Activated CD4-positive, alpha-beta T cell treated with anti-CD3 and anti-CD28 coated beads for 36 hours (primary cell): ENCODE measurements at regions of chr15 and their contacts with region 1.

Region 1: DNA sequence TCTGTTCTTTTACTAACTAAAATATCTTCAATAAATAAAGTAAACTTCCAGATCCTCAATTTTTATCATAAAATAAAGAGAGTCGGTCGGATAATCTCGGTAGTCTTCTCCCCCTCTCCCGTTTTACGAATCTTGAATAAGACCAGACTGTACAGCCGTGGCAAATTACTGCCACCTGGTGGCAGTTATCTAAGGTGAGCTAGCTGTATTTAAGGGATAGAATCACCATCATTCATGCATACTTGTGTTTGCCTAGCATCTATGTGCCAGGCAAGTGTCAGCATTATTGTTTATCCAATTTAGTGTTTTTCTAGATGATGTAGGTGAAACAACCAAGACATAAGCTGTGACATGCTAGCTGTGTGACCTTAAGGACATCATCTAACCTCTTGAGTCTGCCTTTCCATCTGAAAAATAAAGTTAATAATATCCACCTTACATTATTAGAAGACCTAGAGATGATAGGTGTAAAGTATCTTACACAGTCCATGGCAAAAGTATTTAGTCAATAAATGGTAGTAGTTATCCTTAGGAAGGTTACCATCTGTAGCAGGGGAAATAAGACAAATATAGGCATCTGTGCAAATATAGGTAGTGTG is 21.3 kb downstream of the DUT start:
- DNase-seq: peak; percentile 69
- ATAC-seq: peak; percentile 79
- H3K4me3 Mint-ChIP-seq: no peak overlapping the region
- H3K27ac Mint-ChIP-seq: no peak overlapping the region
- H3K4me1 Mint-ChIP-seq: no peaks in the 10 kb centered on the region
- H3K27me3 Mint-ChIP-seq: peaks cover 5% of the 10 kb centered on the region

Region 2: DNA sequence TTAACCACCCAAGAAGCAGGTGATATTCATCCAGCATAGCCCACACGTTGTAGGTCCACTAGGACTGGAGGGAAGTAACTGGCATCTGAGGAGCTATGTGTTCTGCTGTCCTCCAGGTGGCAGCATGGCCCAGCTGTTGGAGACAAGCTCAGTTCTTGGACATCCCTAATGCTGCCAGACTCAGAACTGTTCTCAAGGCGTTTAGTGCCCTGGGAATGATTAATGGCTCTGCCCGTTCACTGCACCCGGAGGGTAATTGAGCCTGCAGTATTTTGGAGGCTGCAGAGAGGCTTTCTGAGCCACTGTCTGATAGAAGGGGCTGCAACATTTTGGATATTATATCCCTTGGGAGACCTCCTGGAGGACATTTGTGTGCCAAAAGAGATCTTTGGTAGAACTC is 1156.5 kb before region 1 on chr15:
- CTCF ChIA-PET with region 1: interaction called, 4 read pairs
- POLR2A ChIA-PET with region 1: no interaction called
- intact Hi-C with region 1: loop called in 1 of 2 experiments (anchors 5 kb)
- DNase-seq: peak; percentile 75
- ATAC-seq: peak; percentile 36
- H3K4me3 Mint-ChIP-seq: no peak overlapping the region
- H3K27ac Mint-ChIP-seq: no peak overlapping the region
- H3K4me1 Mint-ChIP-seq: no peaks in the 10 kb centered on the region
- H3K27me3 Mint-ChIP-seq: peaks cover 5% of the 10 kb centered on the region

Region 3: DNA sequence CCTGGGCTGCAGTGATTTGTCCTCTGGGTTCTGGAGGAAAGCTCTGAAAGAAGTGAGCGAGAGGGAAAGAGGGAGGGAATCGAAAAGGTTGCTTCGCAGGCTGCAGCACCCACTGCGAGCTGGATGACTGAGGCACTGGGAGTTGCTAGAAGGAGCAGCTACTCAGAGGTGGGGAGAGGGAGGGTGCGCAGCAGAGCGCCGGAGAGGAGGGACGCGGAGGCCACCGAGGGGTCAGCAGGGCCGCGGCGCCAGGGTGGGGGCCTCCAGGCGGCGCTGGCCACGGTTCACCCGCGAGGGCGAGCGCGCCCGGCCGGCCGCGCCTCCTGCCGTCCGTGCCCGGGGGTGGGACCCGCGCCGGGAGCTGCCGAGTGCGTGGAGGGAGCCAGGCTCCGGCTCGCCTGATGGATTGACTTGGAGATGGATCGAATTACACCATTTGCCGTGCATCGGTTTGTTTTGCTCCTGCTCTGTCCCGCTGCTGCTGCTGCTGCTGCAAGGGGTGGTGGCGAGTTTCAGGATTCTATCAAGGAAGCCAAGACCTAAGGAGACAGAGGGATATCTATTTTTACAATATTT is 635.4 kb before region 1 on chr15 and contains the start of gene SEMA6D:
- CTCF ChIA-PET with region 1: no interaction called
- POLR2A ChIA-PET with region 1: no interaction called
- intact Hi-C with region 1: loop called in 1 of 2 experiments (anchors 10 kb)
- DNase-seq: peak; percentile 7
- ATAC-seq: no peak
- H3K4me3 Mint-ChIP-seq: no peak within 1 kb of the TSS
- H3K27ac Mint-ChIP-seq: no peak within 1 kb of the TSS
- H3K4me1 Mint-ChIP-seq: peaks cover 2% of the 10 kb centered on the region
- H3K27me3 Mint-ChIP-seq: peaks cover 51% of the 10 kb centered on the region
- total RNA-seq, gene SEMA6D: not detected

Region 4: DNA sequence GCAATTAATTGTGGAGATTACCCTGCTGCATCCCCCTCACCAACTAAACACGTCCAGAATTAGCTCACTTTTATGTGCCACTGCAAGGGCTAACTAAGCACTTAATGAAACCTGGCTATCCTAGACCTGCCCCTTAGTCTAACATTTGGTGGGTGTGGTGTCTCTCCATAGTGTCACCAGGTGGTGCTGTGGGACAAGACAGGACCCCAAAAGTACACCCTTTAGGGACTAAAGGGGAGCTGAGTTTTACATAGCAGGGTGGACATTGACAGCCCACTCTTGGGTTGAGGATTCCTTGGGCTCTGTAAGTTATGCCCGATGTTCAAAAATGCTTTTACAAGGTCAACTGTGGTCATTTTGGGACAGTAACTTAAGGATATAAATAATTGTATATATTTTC is 15.6 kb before region 1 on chr15:
- CTCF ChIA-PET with region 1: interaction called, 26 read pairs
- POLR2A ChIA-PET with region 1: no interaction called
- intact Hi-C with region 1: no loop called
- DNase-seq: peak; percentile 16
- ATAC-seq: no peak
- H3K4me3 Mint-ChIP-seq: no peak overlapping the region
- H3K27ac Mint-ChIP-seq: no peak overlapping the region
- H3K4me1 Mint-ChIP-seq: peaks cover 41% of the 10 kb centered on the region
- H3K27me3 Mint-ChIP-seq: no peaks in the 10 kb centered on the region

Region 5: DNA sequence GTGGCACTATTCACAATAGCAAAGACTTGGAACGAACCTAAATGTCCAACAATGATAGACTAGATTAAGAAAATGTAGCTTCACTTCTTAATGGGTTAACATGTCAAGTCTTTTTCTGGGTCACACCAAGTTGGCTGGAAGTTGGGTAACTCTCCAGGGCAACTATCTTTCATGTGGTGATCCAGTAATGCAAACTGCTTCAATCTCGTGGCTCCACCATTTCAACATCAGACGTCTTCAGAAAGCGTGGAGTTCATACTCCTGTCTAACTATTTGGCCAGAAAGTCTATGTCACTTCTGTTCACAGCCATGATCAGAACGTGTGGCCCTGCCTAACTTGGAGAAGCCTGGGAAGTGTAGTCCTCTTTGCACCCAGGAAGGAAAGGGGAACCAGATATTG is 10.9 kb after region 1 on chr15:
- CTCF ChIA-PET with region 1: interaction called, 10 read pairs
- POLR2A ChIA-PET with region 1: no interaction called
- intact Hi-C with region 1: no loop called
- DNase-seq: no peak
- ATAC-seq: no peak
- H3K4me3 Mint-ChIP-seq: no peak overlapping the region
- H3K27ac Mint-ChIP-seq: no peak overlapping the region
- H3K4me1 Mint-ChIP-seq: peaks cover 5% of the 10 kb centered on the region
- H3K27me3 Mint-ChIP-seq: peaks cover 3% of the 10 kb centered on the region

Region 6: DNA sequence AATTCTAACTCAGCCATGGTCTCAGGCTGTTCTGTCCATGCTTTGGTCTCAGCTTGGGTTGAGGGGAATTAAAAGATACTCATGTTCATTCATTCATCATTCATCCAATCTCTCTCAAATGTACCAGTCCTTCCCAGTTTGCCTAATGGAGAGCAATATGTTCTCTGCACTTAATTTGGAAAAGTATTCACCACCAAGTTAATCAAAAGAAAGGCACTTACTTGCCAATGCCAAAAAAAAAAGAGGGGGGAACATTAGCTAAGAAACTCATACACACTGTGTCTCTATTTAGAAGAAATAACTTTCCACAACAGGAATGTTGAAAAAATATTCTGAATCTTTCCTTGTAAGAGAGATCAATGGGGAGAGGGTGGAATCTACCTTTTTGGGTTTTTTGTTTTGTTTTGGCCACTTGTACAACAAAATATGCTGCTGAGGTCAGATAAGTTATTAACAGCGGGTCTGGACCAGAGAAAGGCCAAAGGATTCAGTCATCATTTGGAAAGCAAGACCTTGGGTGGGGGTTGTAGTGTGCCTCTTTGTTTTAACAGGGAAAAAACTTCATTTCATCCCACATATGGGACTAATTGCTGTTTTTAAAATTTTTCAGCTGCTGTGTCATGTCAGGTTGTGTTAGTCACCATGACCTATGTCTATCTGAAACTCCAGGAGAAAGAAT is 140.7 kb after region 1 on chr15:
- CTCF ChIA-PET with region 1: no interaction called
- POLR2A ChIA-PET with region 1: no interaction called
- intact Hi-C with region 1: no loop called
- DNase-seq: no peak
- ATAC-seq: no peak
- H3K4me3 Mint-ChIP-seq: no peak overlapping the region
- H3K27ac Mint-ChIP-seq: no peak overlapping the region
- H3K4me1 Mint-ChIP-seq: no peaks in the 10 kb centered on the region
- H3K27me3 Mint-ChIP-seq: no peaks in the 10 kb centered on the region

Region 7: DNA sequence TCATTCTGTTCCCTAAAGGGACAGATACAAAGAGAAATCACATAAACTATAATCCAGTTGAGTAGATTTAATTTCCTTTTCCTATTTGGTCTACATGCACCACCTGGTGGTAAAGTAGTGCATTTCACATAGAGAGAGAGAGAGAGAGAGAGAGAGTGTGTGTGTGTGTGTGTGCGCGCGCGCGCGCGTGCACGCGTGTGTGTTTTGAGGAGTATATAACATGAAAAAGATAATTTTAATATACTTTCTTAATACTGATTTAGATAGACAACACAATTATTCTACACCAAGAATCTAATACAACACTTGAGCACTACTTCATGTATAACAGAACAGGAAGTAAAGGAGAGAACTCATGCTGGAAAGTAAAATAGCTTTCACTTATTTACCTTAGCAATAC is 1069.4 kb after region 1 on chr15:
- CTCF ChIA-PET with region 1: no interaction called
- POLR2A ChIA-PET with region 1: no interaction called
- intact Hi-C with region 1: loop called in 1 of 2 experiments (anchors 10 kb)
- DNase-seq: peak; percentile 51
- ATAC-seq: peak; percentile 26
- H3K4me3 Mint-ChIP-seq: no peak overlapping the region
- H3K27ac Mint-ChIP-seq: no peak overlapping the region
- H3K4me1 Mint-ChIP-seq: peaks cover 4% of the 10 kb centered on the region
- H3K27me3 Mint-ChIP-seq: no peaks in the 10 kb centered on the region